Calu3 (cell line): ENCODE measurements at regions of chr3 and their contacts with region 1.

Region 1: DNA sequence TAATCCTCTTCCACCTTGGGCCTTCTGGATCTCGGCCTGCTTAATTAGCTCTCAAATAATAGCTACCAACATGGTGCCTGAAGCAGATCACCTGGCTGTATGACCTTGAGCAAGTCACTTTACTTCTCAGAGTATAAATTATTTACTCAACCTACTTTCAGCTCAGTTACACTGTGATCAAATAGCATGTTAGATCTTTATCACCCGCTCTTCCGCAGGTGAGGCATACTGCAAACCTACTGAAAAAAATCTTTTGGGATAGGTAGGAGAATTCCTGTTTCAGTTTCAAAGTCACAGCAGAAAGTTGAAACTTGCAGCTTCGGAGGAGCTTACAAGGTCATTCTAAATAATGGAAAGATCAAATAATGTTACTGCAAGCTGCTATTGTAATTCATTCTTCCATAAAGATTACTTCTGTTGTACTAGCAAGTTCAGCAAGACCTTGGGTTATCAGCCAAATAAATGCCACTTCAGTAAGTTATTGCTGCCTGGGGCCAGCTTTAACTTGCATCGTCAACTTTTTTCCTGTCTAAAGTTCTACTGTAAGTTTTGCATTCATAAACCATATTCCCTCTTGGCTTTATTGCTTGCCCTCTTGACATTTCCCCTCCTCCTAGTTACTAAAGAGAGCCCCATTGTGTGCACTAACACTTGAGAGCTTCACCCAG is 268.4 kb upstream of the ATP11B start:
- DNase-seq: peak; percentile 7
- H3K4me3 Mint-ChIP-seq: no peak overlapping the region
- H3K27ac Mint-ChIP-seq: no peak overlapping the region
- H3K4me1 Mint-ChIP-seq: peaks cover 26% of the 10 kb centered on the region
- H3K27me3 Mint-ChIP-seq: no peaks in the 10 kb centered on the region
- CTCF ChIP-seq: no peak

Region 2: GRCh38 chr3:182544542-182544941 is 19.7 kb after region 1 on chr3:
- CTCF ChIA-PET with region 1: no interaction called
- intact Hi-C with region 1: no loop called
- DNase-seq: no peak
- H3K4me3 Mint-ChIP-seq: no peak overlapping the region
- H3K27ac Mint-ChIP-seq: no peak overlapping the region
- H3K4me1 Mint-ChIP-seq: no peaks in the 10 kb centered on the region
- H3K27me3 Mint-ChIP-seq: no peaks in the 10 kb centered on the region
- CTCF ChIP-seq: no peak

Region 3: GRCh38 chr3:182565916-182566796 is 41.3 kb after region 1 on chr3:
- CTCF ChIA-PET with region 1: no interaction called
- intact Hi-C with region 1: loop called (anchors 2 kb)
- DNase-seq: no peak
- H3K4me3 Mint-ChIP-seq: no peak overlapping the region
- H3K27ac Mint-ChIP-seq: no peak overlapping the region
- H3K4me1 Mint-ChIP-seq: peaks cover 23% of the 10 kb centered on the region
- H3K27me3 Mint-ChIP-seq: no peaks in the 10 kb centered on the region
- CTCF ChIP-seq: no peak